PC-3 (cell line): ENCODE measurements at regions of chr1 and their contacts with region 1.

Region 1: GRCh38 chr1:234997201-234997895 is 131.3 kb downstream of the TOMM20 start:
- DNase-seq: peak; percentile 98
- ATAC-seq: peak; percentile 67
- H3K4me3 ChIP-seq: peak overlapping the region; percentile 58
- H3K27ac ChIP-seq: peak overlapping the region; percentile 100
- H3K4me1 ChIP-seq: peaks cover 28% of the 10 kb centered on the region
- H3K27me3 ChIP-seq: no peaks in the 10 kb centered on the region
- CTCF ChIP-seq: no peak

Region 2: GRCh38 chr1:234610348-234611152 is 386.8 kb before region 1 on chr1:
- CTCF ChIA-PET with region 1: no interaction called
- POLR2A ChIA-PET with region 1: interaction called, 4 read pairs
- intact Hi-C with region 1: loop called (anchors 1 kb)
- DNase-seq: peak; percentile 84
- ATAC-seq: peak; percentile 55
- H3K4me3 ChIP-seq: peak overlapping the region; percentile 68
- H3K27ac ChIP-seq: peak overlapping the region; percentile 97
- H3K4me1 ChIP-seq: peaks cover 33% of the 10 kb centered on the region
- H3K27me3 ChIP-seq: no peaks in the 10 kb centered on the region
- CTCF ChIP-seq: no peak

Region 3: GRCh38 chr1:234691567-234691966 is 305.8 kb before region 1 on chr1:
- CTCF ChIA-PET with region 1: no interaction called
- POLR2A ChIA-PET with region 1: no interaction called
- intact Hi-C with region 1: no loop called
- DNase-seq: peak; percentile 44
- ATAC-seq: peak; percentile 74
- H3K4me3 ChIP-seq: no peak overlapping the region
- H3K27ac ChIP-seq: no peak overlapping the region
- H3K4me1 ChIP-seq: no peaks in the 10 kb centered on the region
- H3K27me3 ChIP-seq: no peaks in the 10 kb centered on the region
- CTCF ChIP-seq: peak; percentile 50; the same call in 1 of the 2 replicates

Region 4: DNA sequence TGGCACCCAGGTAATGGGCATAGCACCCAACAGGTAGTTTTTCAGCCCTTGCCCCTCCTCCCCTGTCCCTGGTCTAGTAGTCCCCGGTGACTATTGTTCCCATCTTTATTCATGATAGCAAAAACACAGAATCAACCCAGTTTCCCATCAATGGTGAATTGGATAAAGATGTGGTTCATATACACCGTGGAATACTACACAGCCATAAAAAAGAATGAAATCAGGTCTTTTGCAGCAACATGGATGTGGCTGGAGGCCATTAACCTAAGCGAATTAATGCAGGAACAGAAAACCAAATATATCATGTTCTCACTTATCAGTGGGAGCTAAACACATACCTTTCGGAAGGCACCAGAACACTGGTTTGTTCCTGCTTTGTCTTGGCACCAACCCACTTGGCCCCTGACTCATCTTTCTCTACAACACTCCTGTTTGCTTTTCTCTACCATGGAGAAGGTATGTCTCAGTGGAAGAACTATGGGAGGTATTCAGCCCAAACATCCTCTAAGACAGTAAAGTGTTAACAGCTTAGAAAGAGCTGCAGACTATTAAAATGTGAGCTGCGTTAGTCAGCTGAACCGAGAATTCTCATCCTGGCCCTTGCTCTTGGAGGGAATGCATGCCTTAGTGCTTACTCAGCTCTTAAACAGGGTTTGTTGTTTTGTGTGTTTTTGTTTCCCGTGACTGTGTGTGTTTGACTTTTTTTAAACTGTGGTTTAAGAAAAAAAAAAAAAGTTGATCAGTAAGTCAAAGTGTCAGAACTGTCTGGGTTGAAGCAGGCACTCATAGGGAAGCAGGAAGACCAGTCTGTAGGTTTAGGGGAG is 71.7 kb before region 1 on chr1:
- CTCF ChIA-PET with region 1: no interaction called
- POLR2A ChIA-PET with region 1: interaction called, 5 read pairs
- intact Hi-C with region 1: loop called (anchors 1 kb)
- DNase-seq: peak; percentile 96
- ATAC-seq: peak; percentile 97
- H3K4me3 ChIP-seq: no peak overlapping the region
- H3K27ac ChIP-seq: peak overlapping the region; percentile 92
- H3K4me1 ChIP-seq: peaks cover 26% of the 10 kb centered on the region
- H3K27me3 ChIP-seq: no peaks in the 10 kb centered on the region
- CTCF ChIP-seq: no peak

Region 5: DNA sequence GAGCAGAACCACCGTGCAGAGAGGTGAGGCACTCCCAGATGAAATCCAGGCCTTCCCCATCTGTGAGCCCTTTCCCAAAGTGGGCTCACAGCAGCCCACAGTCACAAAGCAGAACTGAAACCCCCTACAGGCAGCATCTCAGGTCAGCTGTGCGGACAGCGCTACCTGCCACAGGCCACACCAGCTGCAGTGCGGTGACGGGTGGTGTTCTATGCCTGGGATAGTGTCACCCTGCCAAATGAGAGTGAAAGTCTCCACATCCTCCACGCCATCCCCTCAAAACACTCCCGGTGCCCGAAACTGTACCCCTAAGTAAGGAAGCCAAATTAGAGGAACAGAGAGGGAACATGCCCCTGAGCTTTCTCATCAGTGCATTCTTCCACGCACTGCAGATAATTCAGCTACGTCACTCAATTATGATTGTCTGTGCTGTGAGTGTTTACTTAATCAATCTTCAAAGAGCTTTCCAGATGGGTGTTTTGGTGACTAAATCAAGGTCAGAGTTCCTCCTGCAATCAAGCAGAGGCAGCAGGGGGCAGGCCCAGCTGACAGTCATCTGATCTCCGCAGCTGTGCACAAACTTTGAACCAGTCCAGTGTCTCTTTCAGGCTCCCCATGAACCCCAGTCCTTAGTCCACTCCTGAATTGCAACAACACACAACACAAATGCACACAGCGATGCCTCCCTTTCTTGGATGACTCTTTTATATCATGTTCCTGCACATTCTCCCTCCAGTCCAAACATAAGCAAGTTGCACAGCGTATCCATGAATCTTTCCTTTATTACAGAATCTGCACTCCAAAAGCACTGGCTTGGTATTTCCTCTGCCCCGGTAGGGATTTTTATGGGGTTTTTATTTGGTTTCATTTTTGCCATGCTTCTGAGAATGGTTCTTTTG is 18.7 kb before region 1 on chr1:
- CTCF ChIA-PET with region 1: interaction called, 3 read pairs
- POLR2A ChIA-PET with region 1: interaction called, 8 read pairs
- intact Hi-C with region 1: loop called (anchors 1 kb)
- DNase-seq: peak; percentile 60
- ATAC-seq: peak; percentile 27
- H3K4me3 ChIP-seq: no peak overlapping the region
- H3K27ac ChIP-seq: peak overlapping the region; percentile 100
- H3K4me1 ChIP-seq: peaks cover 74% of the 10 kb centered on the region
- H3K27me3 ChIP-seq: no peaks in the 10 kb centered on the region
- CTCF ChIP-seq: no peak